ENCODE measurements at regions of chr1 and their contacts with region 1.

Region 1: DNA sequence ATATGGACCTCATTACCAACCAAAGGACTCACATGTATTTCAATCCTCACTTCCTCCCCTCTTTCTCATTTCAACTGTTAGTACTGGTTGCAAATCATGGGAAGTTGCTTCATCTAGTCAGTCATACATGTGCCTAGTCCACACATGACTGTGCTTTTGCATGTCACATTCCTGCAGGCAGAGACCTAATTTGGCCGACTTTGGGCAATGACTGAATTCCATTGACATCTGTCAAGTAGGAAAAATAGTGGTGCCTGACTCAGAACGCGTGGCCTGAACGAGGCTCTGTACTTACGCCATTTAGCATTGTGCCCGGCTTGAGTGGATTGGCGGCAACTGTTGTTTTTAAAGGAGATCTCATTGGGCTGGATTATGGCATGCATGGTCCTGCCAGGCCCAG is 18.0 kb downstream of the PTPRU start:
- DNase-seq: no peak
- H3K4me3 ChIP-seq: no peak overlapping the region
- H3K27ac ChIP-seq: no peak overlapping the region
- H3K4me1 ChIP-seq: peaks cover 18% of the 10 kb centered on the region
- H3K27me3 ChIP-seq: no peaks in the 10 kb centered on the region
- CTCF ChIP-seq: no peak
- POLR2A ChIP-seq: no peak

Region 2: DNA sequence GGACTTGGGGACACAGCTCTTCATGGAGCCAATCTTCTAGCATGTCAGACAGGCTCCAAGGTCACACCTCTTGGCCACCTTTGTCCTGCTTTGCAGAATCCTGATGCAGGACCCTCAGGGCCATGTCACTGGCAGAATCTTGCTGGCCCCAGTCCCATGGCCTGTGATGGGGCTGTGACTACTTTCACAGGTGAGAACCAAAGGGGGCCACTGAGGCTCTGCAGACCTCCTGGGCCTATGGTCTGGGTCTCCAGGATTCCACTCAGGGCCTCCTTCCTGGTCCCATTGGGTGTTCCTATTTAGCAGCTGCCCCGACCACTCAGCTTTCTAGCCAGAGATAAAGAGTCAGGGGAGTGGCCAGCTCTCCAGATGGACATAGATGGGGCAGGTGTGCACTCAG is 1230.3 kb after region 1 on chr1:
- intact Hi-C with region 1: loop called (anchors 5 kb)
- DNase-seq: no peak
- H3K4me3 ChIP-seq: no peak overlapping the region
- H3K27ac ChIP-seq: no peak overlapping the region
- H3K4me1 ChIP-seq: no peaks in the 10 kb centered on the region
- H3K27me3 ChIP-seq: no peaks in the 10 kb centered on the region
- CTCF ChIP-seq: no peak
- POLR2A ChIP-seq: no peak